GM12878 (cell line): ENCODE measurements at regions of chr6 and their contacts with region 1.

Region 1: DNA sequence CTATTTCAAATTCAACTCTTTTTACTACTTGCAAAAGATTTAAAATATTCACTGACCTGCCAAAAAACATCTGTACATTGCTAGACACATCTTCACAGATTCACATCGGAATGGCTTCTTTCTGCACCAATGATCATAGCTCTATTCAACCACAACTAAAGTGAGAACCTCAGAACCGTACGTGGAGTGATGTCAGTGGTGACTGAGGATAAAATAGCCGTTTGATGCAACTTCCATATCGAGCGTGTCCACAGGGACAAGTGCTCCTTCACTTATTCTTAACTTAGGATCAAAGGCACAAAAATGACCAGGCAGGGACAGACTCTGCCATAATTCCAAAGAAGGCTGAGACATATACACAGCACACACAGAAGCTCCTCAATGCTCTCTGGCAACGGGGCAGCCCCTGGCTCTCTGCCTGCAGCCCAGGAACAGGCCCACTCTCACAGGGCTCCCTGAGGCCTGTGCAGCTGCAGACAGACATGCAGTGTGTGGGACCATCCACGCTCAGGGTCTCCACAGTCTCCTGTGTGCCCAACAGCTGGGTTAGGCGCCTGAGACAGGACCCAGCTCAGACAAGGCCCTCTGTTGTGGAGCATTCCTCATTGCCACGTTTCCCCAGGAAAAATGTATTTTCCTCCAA is 22.8 kb downstream of the FYN start:
- DNase-seq: no peak
- ATAC-seq: peak; percentile 73
- H3K4me3 ChIP-seq: no peak overlapping the region
- H3K27ac ChIP-seq: peak overlapping the region; percentile 60; the same call in 1 of the 2 replicates
- H3K4me1 ChIP-seq: peaks cover 40% of the 10 kb centered on the region
- H3K27me3 ChIP-seq: no peaks in the 10 kb centered on the region
- CTCF ChIP-seq: no peak
- EP300 ChIP-seq: 0 out of 4 replicates have a peak, but pooled peaks of 1 of the 2 experiments have one; percentile 23
- POLR2A ChIP-seq: no peak
- RAD21 ChIP-seq: no peak

Region 2: DNA sequence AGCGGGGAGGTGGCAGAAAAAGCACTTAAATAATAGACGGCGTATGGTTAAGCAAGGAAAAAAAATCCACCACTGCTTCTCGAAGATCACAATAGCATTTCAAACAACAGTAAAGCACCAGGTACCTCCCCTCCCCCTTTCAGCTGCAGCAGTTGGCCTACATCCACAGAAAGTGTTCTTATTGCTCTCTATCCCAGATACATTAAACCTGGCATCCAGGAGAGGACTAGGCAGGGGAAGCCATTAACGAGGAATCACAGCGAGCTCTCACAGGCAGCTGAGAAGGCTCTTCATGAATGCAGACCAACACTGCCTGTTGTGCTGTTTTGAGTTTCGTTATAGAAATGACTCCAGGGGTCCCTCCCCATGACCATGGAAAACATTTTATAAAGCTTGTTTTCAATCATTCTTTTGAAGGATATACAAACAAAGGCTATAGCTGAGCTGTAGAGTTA is 11.0 kb after region 1 on chr6:
- CTCF ChIA-PET with region 1: interaction called, 11 read pairs
- POLR2A ChIA-PET with region 1: interaction called, 5 read pairs
- RAD21 ChIA-PET with region 1: interaction called, 18 read pairs
- SMC1A ChIA-PET with region 1: interaction called, 22 read pairs
- in situ Hi-C with region 1: no loop called
- intact Hi-C with region 1: no loop called
- DNase-seq: no peak
- ATAC-seq: no peak
- H3K4me3 ChIP-seq: no peak overlapping the region
- H3K27ac ChIP-seq: no peak overlapping the region
- H3K4me1 ChIP-seq: peaks cover 21% of the 10 kb centered on the region
- H3K27me3 ChIP-seq: no peaks in the 10 kb centered on the region
- CTCF ChIP-seq: no peak
- EP300 ChIP-seq: no peak
- POLR2A ChIP-seq: no peak
- RAD21 ChIP-seq: no peak

Region 3: DNA sequence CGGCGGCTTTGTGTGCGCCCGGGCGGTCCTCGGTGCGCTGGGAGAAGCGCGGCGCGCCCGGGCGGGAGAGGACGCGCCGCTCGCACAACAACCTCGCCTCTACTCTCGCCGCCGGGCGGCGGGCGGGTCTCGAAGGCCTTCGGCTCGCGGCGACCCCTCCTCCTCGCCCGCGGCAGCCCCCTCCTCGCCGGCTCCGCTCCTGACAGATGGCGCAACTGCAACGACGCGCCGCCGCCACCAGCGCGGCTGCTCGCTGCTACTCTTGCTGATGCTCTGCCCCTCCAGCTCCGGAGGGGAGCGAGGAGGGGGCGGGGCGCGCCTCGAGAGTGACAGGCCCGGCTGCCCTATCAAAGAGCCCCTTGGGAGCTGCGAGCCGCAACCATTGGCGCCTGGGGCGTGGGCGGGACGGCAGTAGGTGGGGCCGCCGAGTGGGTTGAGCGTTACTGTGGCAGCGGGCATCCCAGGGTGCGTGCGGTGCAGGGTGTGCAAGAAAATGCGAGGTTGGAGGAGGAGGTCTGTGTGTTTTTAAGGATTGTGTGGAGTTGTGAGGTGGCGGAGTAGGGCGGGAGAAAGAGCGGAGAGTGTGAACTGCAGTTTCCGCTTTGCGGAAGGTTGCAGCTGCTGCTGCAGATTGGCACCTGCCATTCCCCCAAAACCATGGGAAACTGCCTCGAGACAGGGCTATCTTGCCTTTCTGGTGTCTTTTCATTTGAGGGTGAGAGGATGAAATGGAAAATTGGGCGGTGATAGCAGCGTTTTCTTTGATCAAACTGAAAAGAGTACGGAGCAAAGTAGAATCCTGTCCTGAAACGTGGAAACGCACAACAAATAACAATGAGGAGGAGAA is 23.0 kb after region 1 on chr6 and contains the start of gene FYN:
- CTCF ChIA-PET with region 1: interaction called, 11 read pairs
- POLR2A ChIA-PET with region 1: interaction called, 6 read pairs
- RAD21 ChIA-PET with region 1: interaction called, 49 read pairs
- SMC1A ChIA-PET with region 1: interaction called, 25 read pairs
- in situ Hi-C with region 1: no loop called
- intact Hi-C with region 1: loop called (anchors 2 kb)
- DNase-seq: peak; percentile 76
- ATAC-seq: peak; percentile 92
- H3K4me3 ChIP-seq: peak within 1 kb of the TSS; percentile 98
- H3K27ac ChIP-seq: peak within 1 kb of the TSS; percentile 76
- H3K4me1 ChIP-seq: peaks cover 5% of the 10 kb centered on the region
- H3K27me3 ChIP-seq: no peaks in the 10 kb centered on the region
- CTCF ChIP-seq: peak; percentile 28 to 65 (median 30); a peak in 5 of 6 replicates
- EP300 ChIP-seq: no peak
- POLR2A ChIP-seq: peak; percentile 95
- RAD21 ChIP-seq: peak; percentile 48
- polyA plus RNA-seq, gene FYN: 51.4 to 55.1 TPM